Caco-2 (cell line): ENCODE measurements at regions of chr12 and their contacts with region 1.

Region 1: DNA sequence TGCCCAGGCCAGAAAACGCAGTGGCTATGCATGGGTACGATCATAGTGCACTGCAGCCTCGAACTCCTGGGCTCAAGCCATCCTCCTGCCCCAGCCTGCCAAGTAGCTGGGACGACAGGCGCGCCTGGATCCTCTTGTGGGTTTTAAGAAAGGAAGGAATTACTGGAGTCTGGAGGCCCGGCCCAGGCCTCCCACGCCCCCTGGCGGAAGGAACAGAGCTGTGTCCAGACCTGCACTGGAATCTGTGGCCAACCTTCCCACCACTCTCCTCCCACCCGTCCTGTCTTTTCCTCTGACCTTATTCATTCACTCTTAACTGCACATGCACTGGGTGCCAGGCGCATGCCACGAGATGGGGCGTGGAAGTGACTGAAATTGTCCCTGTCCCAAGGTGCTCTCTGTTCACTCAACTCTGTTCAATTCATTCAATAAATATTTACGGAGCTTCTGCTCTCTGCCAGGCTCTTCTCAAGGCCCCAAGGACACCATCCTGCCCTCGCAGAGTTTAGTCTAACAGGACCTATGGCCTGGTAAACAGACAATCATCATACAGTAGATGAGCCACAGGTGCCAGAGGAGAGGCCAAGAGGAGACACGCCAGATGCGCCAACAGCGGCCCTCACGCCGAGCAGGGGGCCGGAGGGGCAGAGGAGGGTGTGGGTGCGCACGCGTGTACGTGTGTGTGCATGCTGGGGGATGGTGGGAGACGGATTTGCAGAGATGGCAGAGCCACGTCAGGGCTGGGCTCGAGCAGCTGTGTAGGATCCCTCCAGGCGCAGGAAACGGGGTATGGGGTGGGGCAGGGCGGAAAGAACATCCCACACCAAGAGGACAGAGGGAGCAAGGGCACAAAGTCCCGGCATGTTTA is 13.7 kb upstream of the TMEM106C start:
- DNase-seq: peak; percentile 86 to 94
- H3K4me3 ChIP-seq: no peak overlapping the region
- H3K4me3 Mint-ChIP-seq: no peak overlapping the region
- H3K27ac Mint-ChIP-seq: no peak overlapping the region
- H3K4me1 ChIP-seq: peaks cover 24% of the 10 kb centered on the region
- H3K4me1 Mint-ChIP-seq: peaks cover 40% of the 10 kb centered on the region
- H3K27me3 ChIP-seq: no peaks in the 10 kb centered on the region
- H3K27me3 Mint-ChIP-seq: no peaks in the 10 kb centered on the region
- CTCF ChIP-seq: peak; percentile 94 to 97

Region 2: DNA sequence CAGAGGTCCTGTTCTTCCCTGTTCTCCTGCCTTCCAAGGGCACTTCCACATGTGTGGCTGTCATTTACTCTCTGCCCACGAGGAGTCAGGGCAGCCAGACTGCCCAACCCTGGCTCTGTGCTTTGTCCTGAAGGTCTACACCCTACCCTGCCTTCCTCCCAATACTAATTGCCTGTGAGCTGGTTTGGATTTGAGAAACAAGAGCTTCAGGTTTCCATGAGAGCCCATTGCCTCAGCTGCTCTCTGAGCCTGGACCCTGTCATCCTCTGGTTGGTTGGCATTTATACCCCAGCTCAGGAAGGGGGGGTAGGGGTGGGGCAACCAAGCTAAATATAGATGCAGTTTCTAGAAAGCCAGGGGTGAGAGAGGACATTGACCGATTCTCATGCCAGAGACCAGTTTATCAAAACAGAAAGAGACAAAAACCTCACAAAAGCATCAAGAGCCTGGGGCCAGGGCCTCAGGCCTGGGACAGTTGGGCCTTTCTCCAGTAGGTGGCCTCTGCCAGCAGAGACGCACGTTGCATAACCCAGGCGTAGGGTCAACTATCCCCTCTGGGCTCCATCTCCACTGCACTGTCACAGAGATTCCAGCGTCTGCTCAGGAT is 79.4 kb before region 1 on chr12:
- CTCF ChIA-PET with region 1: interaction called, 13 read pairs
- POLR2A ChIA-PET with region 1: no interaction called
- intact Hi-C with region 1: loop called (anchors 1 kb)
- DNase-seq: peak; percentile 75 to 78
- H3K4me3 ChIP-seq: no peak overlapping the region
- H3K4me3 Mint-ChIP-seq: no peak overlapping the region
- H3K27ac Mint-ChIP-seq: no peak overlapping the region
- H3K4me1 ChIP-seq: no peaks in the 10 kb centered on the region
- H3K4me1 Mint-ChIP-seq: no peaks in the 10 kb centered on the region
- H3K27me3 ChIP-seq: no peaks in the 10 kb centered on the region
- H3K27me3 Mint-ChIP-seq: no peaks in the 10 kb centered on the region
- CTCF ChIP-seq: peak; percentile 76 to 92

Region 3: GRCh38 chr12:47910486-47910885 is 39.2 kb before region 1 on chr12:
- CTCF ChIA-PET with region 1: interaction called, 187 read pairs
- POLR2A ChIA-PET with region 1: interaction called, 24 read pairs
- intact Hi-C with region 1: loop called (anchors 1 kb)
- DNase-seq: peak; percentile 44 to 66
- H3K4me3 ChIP-seq: no peak overlapping the region
- H3K4me3 Mint-ChIP-seq: peak overlapping the region; percentile 7
- H3K27ac Mint-ChIP-seq: peak overlapping the region; percentile 48
- H3K4me1 ChIP-seq: peaks cover 58% of the 10 kb centered on the region
- H3K4me1 Mint-ChIP-seq: peaks cover 47% of the 10 kb centered on the region
- H3K27me3 ChIP-seq: no peaks in the 10 kb centered on the region
- H3K27me3 Mint-ChIP-seq: no peaks in the 10 kb centered on the region
- CTCF ChIP-seq: no peak

Region 4: GRCh38 chr12:47920913-47921312 is 28.8 kb before region 1 on chr12:
- CTCF ChIA-PET with region 1: no interaction called
- POLR2A ChIA-PET with region 1: no interaction called
- intact Hi-C with region 1: no loop called
- DNase-seq: no peak
- H3K4me3 ChIP-seq: no peak overlapping the region
- H3K4me3 Mint-ChIP-seq: no peak overlapping the region
- H3K27ac Mint-ChIP-seq: no peak overlapping the region
- H3K4me1 ChIP-seq: no peaks in the 10 kb centered on the region
- H3K4me1 Mint-ChIP-seq: no peaks in the 10 kb centered on the region
- H3K27me3 ChIP-seq: no peaks in the 10 kb centered on the region
- H3K27me3 Mint-ChIP-seq: no peaks in the 10 kb centered on the region
- CTCF ChIP-seq: no peak